CD4-positive, alpha-beta T cell (primary cell): ENCODE measurements at regions of chr1 and their contacts with region 1.

Region 1: DNA sequence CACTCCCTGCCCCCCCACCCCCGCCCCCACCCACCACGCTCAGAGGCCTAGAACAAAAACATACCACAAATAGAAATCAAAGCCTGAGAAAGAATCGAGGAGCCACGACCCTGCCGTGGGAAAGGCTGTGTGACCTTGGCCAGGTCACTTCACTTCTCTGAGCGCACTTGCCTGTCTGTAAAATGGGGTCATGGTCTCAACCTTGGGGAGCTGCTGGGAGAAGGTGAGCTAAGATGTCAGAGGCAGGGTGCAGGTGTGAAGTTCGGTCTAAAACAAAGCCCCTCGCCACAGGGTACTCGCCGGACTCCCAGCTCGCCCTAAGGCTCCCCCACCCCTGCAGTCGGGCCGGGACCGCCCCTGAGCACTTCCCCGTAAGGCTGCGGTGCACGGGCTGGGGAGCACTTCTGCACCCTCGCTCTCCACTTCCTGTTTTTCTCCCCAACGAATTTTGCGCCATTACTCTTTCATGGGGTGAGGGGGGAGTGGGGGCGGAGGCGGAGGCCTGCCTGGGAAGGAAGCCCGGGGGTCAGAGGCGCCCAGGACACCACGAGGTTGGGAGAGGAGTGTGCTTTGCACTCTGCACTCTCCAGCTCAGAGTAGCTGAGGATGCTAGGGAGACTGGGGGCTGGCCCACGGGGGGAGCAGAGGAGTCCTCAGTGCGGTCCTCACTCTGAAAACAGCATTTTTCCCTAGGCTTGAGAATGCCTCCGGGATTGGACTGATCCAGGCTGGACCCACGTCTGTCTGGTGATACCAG is 21.9 kb upstream of the PIK3CD start:
- DNase-seq: peak; percentile 41 to 91 (median 76)
- ATAC-seq: peak; percentile 52
- H3K4me3 ChIP-seq: peak overlapping the region; percentile 97
- H3K4me3 Mint-ChIP-seq: peak overlapping the region; percentile 98
- H3K27ac ChIP-seq: peak overlapping the region; percentile 72 to 84
- H3K27ac Mint-ChIP-seq: peak overlapping the region; percentile 92
- H3K4me1 ChIP-seq: peaks cover 77% of the 10 kb centered on the region
- H3K4me1 Mint-ChIP-seq: peaks cover 70% of the 10 kb centered on the region
- H3K27me3 ChIP-seq: no peaks in the 10 kb centered on the region
- H3K27me3 Mint-ChIP-seq: no peaks in the 10 kb centered on the region
- CTCF ChIP-seq: no peak

Region 2: DNA sequence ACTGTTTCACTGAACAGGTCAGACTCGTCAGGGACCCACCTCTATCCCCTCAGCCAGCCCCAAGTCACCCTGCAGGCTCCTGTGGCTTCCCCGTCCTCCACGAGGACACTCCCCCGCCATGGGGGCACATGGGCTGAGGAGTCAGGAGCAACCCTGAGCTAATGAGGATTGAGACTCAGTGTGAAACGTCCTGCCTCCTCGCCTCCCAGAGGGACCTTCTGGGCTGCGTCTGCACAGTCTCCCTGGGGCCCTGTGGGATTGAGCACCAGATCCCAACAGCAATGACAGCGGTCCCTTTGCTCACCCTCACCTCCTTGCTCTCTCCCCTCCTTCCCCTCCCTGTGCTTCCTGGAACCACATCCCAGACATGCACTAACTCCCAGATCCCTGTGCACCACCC is 109.2 kb before region 1 on chr1:
- CTCF ChIA-PET with region 1: no interaction called
- POLR2A ChIA-PET with region 1: no interaction called
- intact Hi-C with region 1: no loop called
- DNase-seq: no peak
- ATAC-seq: no peak
- H3K4me3 ChIP-seq: no peak overlapping the region
- H3K4me3 Mint-ChIP-seq: no peak overlapping the region
- H3K27ac ChIP-seq: no peak overlapping the region
- H3K27ac Mint-ChIP-seq: no peak overlapping the region
- H3K4me1 ChIP-seq: no peaks in the 10 kb centered on the region
- H3K4me1 Mint-ChIP-seq: no peaks in the 10 kb centered on the region
- H3K27me3 ChIP-seq: no peaks in the 10 kb centered on the region
- H3K27me3 Mint-ChIP-seq: no peaks in the 10 kb centered on the region
- CTCF ChIP-seq: no peak

Region 3: GRCh38 chr1:9615316-9616063 is 14.1 kb before region 1 on chr1:
- CTCF ChIA-PET with region 1: interaction called, 10 read pairs
- POLR2A ChIA-PET with region 1: interaction called, 3 read pairs
- intact Hi-C with region 1: no loop called
- DNase-seq: peak; percentile 42 to 75 (median 54)
- ATAC-seq: peak; percentile 92
- H3K4me3 ChIP-seq: no peak overlapping the region
- H3K4me3 Mint-ChIP-seq: no peak overlapping the region
- H3K27ac ChIP-seq: no peak overlapping the region
- H3K27ac Mint-ChIP-seq: no peak overlapping the region
- H3K4me1 ChIP-seq: peaks cover 5% of the 10 kb centered on the region
- H3K4me1 Mint-ChIP-seq: no peaks in the 10 kb centered on the region
- H3K27me3 ChIP-seq: no peaks in the 10 kb centered on the region
- H3K27me3 Mint-ChIP-seq: peaks cover 5% of the 10 kb centered on the region
- CTCF ChIP-seq: peak; percentile 81

Region 4: GRCh38 chr1:9665193-9665592 is 35.6 kb after region 1 on chr1:
- CTCF ChIA-PET with region 1: interaction called, 18 read pairs
- POLR2A ChIA-PET with region 1: interaction called, 512 read pairs
- intact Hi-C with region 1: no loop called
- DNase-seq: no peak
- ATAC-seq: no peak
- H3K4me3 ChIP-seq: no peak overlapping the region
- H3K4me3 Mint-ChIP-seq: no peak overlapping the region
- H3K27ac ChIP-seq: peak overlapping the region in 1 of 2 donors; percentile 39
- H3K27ac Mint-ChIP-seq: peak overlapping the region; percentile 83
- H3K4me1 ChIP-seq: peaks cover 53% of the 10 kb centered on the region
- H3K4me1 Mint-ChIP-seq: peaks cover 52% of the 10 kb centered on the region
- H3K27me3 ChIP-seq: no peaks in the 10 kb centered on the region
- H3K27me3 Mint-ChIP-seq: no peaks in the 10 kb centered on the region
- CTCF ChIP-seq: no peak

Region 5: DNA sequence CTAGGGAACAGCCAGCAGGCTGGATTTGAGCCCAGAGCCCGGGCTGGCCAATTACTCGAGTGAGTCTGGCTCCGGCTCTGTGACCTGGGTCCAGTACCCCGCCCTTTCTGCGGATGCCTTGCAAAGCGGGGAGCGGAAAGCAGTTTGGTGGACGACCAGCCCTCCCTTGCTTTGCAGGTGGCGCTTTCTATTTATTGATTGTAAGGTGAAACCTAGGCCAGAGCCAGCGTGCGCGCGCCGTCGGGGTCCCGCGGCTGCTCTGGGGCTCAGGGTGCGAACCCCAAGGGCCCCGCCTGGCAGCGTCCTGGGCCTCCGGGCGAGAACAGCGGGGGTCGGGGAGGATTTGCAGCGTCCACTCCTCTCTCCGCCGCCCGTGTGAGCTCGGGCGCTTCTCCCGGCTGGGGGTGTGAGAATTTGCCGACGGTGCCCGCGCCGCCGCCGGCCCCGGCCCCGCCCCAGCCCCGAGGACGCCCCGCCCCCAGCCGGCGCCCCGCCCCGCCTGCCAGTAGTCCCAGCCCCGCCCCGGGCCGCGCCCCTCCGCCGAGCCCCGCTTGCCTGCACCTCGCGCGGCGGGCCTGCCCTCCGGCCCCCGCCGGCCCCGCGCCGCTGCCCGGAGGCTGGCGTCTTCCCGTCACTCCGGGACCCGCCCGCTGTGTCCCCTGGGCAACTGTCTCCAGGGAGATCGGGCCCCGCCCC is 59.5 kb after region 1 on chr1:
- CTCF ChIA-PET with region 1: interaction called, 24 read pairs
- POLR2A ChIA-PET with region 1: interaction called, 60 read pairs
- intact Hi-C with region 1: loop called (anchors 2 kb)
- DNase-seq: peak; percentile 76 to 92 (median 83)
- ATAC-seq: peak; percentile 78
- H3K4me3 ChIP-seq: peak overlapping the region; percentile 61
- H3K4me3 Mint-ChIP-seq: peak overlapping the region; percentile 88
- H3K27ac ChIP-seq: peak overlapping the region in 1 of 2 donors; percentile 40
- H3K27ac Mint-ChIP-seq: peak overlapping the region; percentile 74
- H3K4me1 ChIP-seq: peaks cover 76% of the 10 kb centered on the region
- H3K4me1 Mint-ChIP-seq: peaks cover 76% of the 10 kb centered on the region
- H3K27me3 ChIP-seq: no peaks in the 10 kb centered on the region
- H3K27me3 Mint-ChIP-seq: no peaks in the 10 kb centered on the region
- CTCF ChIP-seq: no peak

Region 6: GRCh38 chr1:9724706-9725476 is 95.3 kb after region 1 on chr1:
- CTCF ChIA-PET with region 1: interaction called, 34 read pairs
- POLR2A ChIA-PET with region 1: interaction called, 50 read pairs
- intact Hi-C with region 1: loop called (anchors 2 kb)
- DNase-seq: peak; percentile 52 to 86 (median 68)
- ATAC-seq: peak; percentile 50
- H3K4me3 ChIP-seq: no peak overlapping the region
- H3K4me3 Mint-ChIP-seq: peak overlapping the region; percentile 35
- H3K27ac ChIP-seq: peak overlapping the region in 1 of 2 donors; percentile 34
- H3K27ac Mint-ChIP-seq: peak overlapping the region; percentile 84
- H3K4me1 ChIP-seq: peaks cover 92% of the 10 kb centered on the region
- H3K4me1 Mint-ChIP-seq: peaks cover 58% of the 10 kb centered on the region
- H3K27me3 ChIP-seq: no peaks in the 10 kb centered on the region
- H3K27me3 Mint-ChIP-seq: no peaks in the 10 kb centered on the region
- CTCF ChIP-seq: peak; percentile 92

Region 7: DNA sequence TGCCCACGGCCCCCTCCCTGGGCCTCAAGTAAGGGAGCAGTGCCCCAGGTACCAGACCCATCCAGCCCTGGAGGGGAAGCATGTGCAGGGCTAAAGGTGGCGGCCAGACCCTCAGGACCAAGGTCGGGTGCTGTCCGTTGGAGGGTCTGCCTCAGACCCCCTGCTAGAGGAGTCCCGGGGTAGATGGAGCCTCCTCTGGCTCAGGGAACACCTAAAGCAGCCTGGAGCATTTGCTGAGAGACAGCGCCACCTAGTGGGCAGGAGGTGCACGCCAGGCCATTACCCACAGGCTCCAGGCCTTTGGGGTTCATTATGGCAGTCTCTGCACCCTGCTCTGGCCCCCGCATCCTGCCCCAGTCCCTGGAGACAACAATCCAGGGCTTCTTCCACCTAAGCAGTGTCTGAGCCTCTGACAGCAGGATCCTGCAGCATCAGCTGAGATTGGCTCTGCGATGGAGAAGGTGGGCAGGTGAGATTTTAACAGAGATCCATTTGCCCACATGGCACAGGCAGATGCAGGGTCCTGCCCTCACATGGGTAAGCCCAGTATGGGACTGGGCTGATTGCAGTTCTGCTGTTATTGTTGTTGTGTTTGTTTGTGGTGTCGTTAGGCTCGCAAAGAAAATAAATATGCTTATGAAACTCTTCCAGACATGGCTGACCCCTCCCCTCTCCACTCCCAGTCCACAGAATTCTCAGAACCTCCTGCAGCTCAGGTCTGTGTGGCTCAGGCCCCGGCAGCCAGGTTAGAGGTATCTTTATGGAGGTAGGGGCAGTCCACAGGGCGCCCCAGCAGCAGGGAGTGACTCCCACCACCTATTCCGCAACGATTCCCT is 238.0 kb after region 1 on chr1:
- CTCF ChIA-PET with region 1: interaction called, 9 read pairs
- POLR2A ChIA-PET with region 1: interaction called, 6 read pairs
- intact Hi-C with region 1: loop called (anchors 1 kb)
- DNase-seq: peak; percentile 80 to 94 (median 88)
- ATAC-seq: peak; percentile 100
- H3K4me3 ChIP-seq: no peak overlapping the region
- H3K4me3 Mint-ChIP-seq: no peak overlapping the region
- H3K27ac ChIP-seq: no peak overlapping the region
- H3K27ac Mint-ChIP-seq: no peak overlapping the region
- H3K4me1 ChIP-seq: peaks cover 10% of the 10 kb centered on the region
- H3K4me1 Mint-ChIP-seq: peaks cover 5% of the 10 kb centered on the region
- H3K27me3 ChIP-seq: no peaks in the 10 kb centered on the region
- H3K27me3 Mint-ChIP-seq: no peaks in the 10 kb centered on the region
- CTCF ChIP-seq: peak; percentile 94